ENCODE measurements at regions of chr5 and their contacts with region 1.

Region 1: DNA sequence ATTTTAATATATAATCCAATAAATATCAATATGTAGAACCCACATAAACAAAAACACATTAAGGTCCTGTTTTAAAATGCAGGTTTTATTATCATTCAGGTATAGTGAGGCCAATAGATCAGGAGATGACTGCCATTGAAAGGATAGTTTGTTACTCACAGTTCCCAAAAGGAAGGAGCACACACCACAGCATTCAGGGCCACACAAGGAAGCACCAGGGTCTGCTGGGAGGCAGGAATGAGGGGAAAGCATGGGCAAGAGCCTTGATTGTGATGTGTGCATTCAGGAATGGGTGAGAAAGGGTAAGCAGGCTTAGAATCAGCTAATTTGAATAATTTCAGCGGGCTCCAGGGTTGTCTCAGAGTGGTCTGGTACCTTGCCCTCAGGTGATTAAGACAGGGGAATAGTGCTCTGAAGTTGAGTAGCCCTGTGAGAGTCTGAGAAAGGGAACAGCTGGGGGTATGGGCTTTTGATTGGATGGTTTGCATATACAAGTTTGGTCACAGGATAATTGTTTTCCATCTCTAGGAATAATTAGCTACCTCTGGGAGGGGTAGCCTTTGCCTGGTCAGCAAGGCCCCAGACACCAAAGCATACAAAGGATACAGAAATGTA is 19.8 kb upstream of the OTULIN start:
- DNase-seq: no peak
- H3K4me3 ChIP-seq: no peak overlapping the region
- H3K27ac ChIP-seq: no peak overlapping the region
- H3K4me1 ChIP-seq: no peaks in the 10 kb centered on the region
- H3K27me3 ChIP-seq: peaks cover 3% of the 10 kb centered on the region
- CTCF ChIP-seq: no peak

Region 2: GRCh38 chr5:13976867-13977830 is 667.6 kb before region 1 on chr5:
- CTCF ChIA-PET with region 1: no interaction called
- dilution Hi-C with region 1: no loop called
- in situ Hi-C with region 1: no loop called
- intact Hi-C with region 1: loop called (anchors 1 kb)
- DNase-seq: peak; percentile 53
- H3K4me3 ChIP-seq: no peak overlapping the region
- H3K27ac ChIP-seq: no peak overlapping the region
- H3K4me1 ChIP-seq: no peaks in the 10 kb centered on the region
- H3K27me3 ChIP-seq: no peaks in the 10 kb centered on the region
- CTCF ChIP-seq: peak; percentile 47 to 68

Region 3: GRCh38 chr5:14364576-14365472 is 279.9 kb before region 1 on chr5:
- CTCF ChIA-PET with region 1: no interaction called
- dilution Hi-C with region 1: no loop called
- in situ Hi-C with region 1: no loop called
- intact Hi-C with region 1: loop called (anchors 1 kb)
- DNase-seq: peak; percentile 15
- H3K4me3 ChIP-seq: no peak overlapping the region
- H3K27ac ChIP-seq: no peak overlapping the region
- H3K4me1 ChIP-seq: peaks cover 6% of the 10 kb centered on the region
- H3K27me3 ChIP-seq: no peaks in the 10 kb centered on the region
- CTCF ChIP-seq: peak; percentile 75 to 76

Region 4: GRCh38 chr5:14405267-14405666 is 239.5 kb before region 1 on chr5:
- CTCF ChIA-PET with region 1: no interaction called
- dilution Hi-C with region 1: no loop called
- in situ Hi-C with region 1: loop called in 1 of 2 experiments (anchors 10 kb)
- intact Hi-C with region 1: no loop called
- DNase-seq: no peak
- H3K4me3 ChIP-seq: no peak overlapping the region
- H3K27ac ChIP-seq: no peak overlapping the region
- H3K4me1 ChIP-seq: peaks cover 29% of the 10 kb centered on the region
- H3K27me3 ChIP-seq: no peaks in the 10 kb centered on the region
- CTCF ChIP-seq: peak; percentile 9 to 13

Region 5: GRCh38 chr5:14505310-14506032 is 139.3 kb before region 1 on chr5:
- CTCF ChIA-PET with region 1: no interaction called
- dilution Hi-C with region 1: no loop called
- in situ Hi-C with region 1: no loop called
- intact Hi-C with region 1: loop called (anchors 10 kb)
- DNase-seq: no peak
- H3K4me3 ChIP-seq: no peak overlapping the region
- H3K27ac ChIP-seq: no peak overlapping the region
- H3K4me1 ChIP-seq: no peaks in the 10 kb centered on the region
- H3K27me3 ChIP-seq: no peaks in the 10 kb centered on the region
- CTCF ChIP-seq: no peak

Measured in mammary epithelial cell (primary cell).